ENCODE measurements at regions of chr20 and their contacts with region 1.

Region 1: GRCh38 chr20:51551186-51551585 is 8.7 kb upstream of the NFATC2 start:
- DNase-seq: peak; percentile 56
- ATAC-seq: peak; percentile 80
- H3K4me3 ChIP-seq: no peak overlapping the region
- H3K27ac ChIP-seq: no peak overlapping the region
- H3K4me1 ChIP-seq: peaks cover 13% of the 10 kb centered on the region; the same call in 1 of the 2 replicates
- H3K27me3 ChIP-seq: no peaks in the 10 kb centered on the region
- CTCF ChIP-seq: no peak

Region 2: DNA sequence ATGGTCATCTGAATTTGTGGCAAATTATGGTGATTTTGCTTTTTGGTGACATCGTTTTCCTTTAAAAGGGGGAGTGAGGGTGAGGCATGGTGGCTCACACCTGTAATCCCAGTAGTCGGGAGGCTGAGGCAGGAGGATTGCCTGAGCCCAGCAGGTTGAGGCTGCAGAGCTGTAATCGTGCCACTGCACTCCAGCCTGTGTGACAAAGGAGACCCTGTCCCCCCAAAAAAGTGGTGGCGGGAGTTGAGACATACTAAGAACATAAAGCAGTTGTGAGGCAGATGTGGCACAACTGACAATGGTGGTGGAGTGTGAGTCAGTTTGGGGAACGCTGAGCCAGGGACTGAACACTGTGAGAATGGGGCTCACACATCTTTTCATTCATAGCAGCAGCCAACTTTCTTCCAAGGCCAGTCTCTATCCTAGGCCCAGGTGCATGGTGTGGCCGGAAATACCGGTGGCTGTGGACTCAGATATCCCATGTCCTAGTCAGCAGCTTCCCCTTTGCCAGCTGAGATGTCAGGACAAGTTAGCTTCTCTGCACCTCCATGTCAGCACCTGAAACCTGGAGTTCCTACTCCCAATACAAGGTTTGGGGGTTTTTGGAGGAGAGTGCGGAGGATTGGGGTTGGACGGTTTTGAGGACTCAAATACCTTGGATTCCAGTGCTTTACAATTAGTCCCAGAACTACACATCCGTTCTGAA is 665.3 kb before region 1 on chr20:
- CTCF ChIA-PET with region 1: no interaction called
- POLR2A ChIA-PET with region 1: interaction called, 12 read pairs
- intact Hi-C with region 1: no loop called
- DNase-seq: no peak
- ATAC-seq: no peak
- H3K4me3 ChIP-seq: no peak overlapping the region
- H3K27ac ChIP-seq: no peak overlapping the region
- H3K4me1 ChIP-seq: peaks cover 7% of the 10 kb centered on the region; the same call in 1 of the 2 replicates
- H3K27me3 ChIP-seq: no peaks in the 10 kb centered on the region
- CTCF ChIP-seq: no peak